Panc1 (cell line): ENCODE measurements at regions of chr19 and their contacts with region 1.

Region 1: DNA sequence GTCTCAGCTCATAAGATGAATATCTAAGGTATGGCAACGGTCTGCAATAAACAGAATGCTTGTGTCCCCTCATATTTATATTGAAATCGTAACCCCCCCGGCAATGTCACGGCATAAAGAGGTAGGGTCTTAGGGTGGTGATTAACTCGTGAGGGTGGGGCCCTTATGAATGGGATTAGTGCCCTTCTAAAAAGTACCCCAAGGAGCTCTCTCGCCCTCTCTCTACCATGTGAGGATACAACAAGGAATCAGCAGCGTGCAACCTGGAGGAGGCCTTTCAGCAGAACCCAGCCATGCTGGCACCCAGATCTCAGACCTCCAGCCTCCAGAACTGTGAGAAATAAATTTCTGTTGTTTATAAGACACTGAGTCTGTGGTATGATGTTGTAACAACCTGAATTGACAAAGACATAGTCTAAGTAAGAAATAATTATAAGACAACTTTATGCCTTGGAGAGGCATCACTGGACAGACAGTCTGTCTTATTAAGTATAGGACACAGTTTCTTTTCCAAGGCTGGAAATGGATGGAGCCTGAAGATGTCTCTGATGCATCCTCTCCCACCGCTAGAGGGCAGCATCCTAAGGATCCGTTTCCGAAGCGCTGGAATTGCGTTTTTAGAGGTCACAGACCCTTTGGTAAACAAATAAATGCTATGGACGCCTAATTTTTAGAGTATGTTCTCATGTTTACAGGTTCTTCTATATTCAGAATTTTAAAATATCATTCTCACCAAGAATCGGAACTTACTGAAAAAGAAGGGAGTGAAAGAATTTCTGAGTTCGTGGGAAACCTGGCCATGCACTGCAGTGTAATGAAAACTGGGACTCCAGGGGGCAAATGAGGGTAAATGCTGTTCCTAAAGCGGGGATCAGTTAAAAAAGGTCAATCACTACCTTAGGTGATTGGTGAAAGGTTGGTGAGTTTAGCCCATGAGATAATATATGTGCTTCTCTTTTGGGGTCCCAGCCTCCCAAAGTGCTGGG is 13.3 kb upstream of the LEUTX start:
- DNase-seq: peak; percentile 89
- ATAC-seq: peak; percentile 76
- H3K4me3 ChIP-seq: no peak overlapping the region
- H3K27ac ChIP-seq: no peak overlapping the region
- H3K4me1 ChIP-seq: no peaks in the 10 kb centered on the region
- H3K27me3 ChIP-seq: peaks cover 42% of the 10 kb centered on the region
- CTCF ChIP-seq: no peak

Region 2: DNA sequence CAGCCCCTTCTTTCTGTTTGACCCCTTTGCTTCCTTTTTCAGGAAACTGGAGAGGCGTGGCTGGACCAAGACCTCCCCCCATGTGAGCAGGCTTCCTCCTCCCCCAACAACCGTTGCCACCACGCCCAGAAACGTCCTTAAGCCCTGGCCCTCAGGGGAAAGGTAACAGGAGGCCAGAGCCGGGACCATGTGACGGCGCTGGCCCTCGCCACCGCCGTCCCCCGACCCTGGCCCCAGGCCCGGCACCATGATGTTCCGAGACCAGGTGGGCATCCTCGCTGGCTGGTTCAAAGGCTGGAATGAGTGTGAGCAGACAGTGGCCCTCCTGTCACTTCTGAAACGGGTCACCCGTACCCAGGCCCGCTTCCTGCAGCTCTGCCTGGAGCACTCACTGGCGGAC is 408.7 kb before region 1 on chr19:
- CTCF ChIA-PET with region 1: no interaction called
- POLR2A ChIA-PET with region 1: no interaction called
- in situ Hi-C with region 1: no loop called
- intact Hi-C with region 1: no loop called
- DNase-seq: no peak
- ATAC-seq: no peak
- H3K4me3 ChIP-seq: no peak overlapping the region
- H3K27ac ChIP-seq: no peak overlapping the region
- H3K4me1 ChIP-seq: no peaks in the 10 kb centered on the region
- H3K27me3 ChIP-seq: no peaks in the 10 kb centered on the region
- CTCF ChIP-seq: no peak

Region 3: GRCh38 chr19:39372047-39372802 is 393.2 kb before region 1 on chr19:
- CTCF ChIA-PET with region 1: interaction called, 11 read pairs
- POLR2A ChIA-PET with region 1: no interaction called
- in situ Hi-C with region 1: no loop called
- intact Hi-C with region 1: no loop called
- DNase-seq: no peak
- ATAC-seq: peak; percentile 2
- H3K4me3 ChIP-seq: no peak overlapping the region
- H3K27ac ChIP-seq: no peak overlapping the region
- H3K4me1 ChIP-seq: no peaks in the 10 kb centered on the region
- H3K27me3 ChIP-seq: no peaks in the 10 kb centered on the region
- CTCF ChIP-seq: no peak

Region 4: GRCh38 chr19:39599116-39599515 is 166.3 kb before region 1 on chr19:
- CTCF ChIA-PET with region 1: interaction called, 11 read pairs
- POLR2A ChIA-PET with region 1: no interaction called
- in situ Hi-C with region 1: no loop called
- intact Hi-C with region 1: no loop called
- DNase-seq: no peak
- ATAC-seq: no peak
- H3K4me3 ChIP-seq: no peak overlapping the region
- H3K27ac ChIP-seq: no peak overlapping the region
- H3K4me1 ChIP-seq: no peaks in the 10 kb centered on the region
- H3K27me3 ChIP-seq: peaks cover 88% of the 10 kb centered on the region
- CTCF ChIP-seq: 0 out of 2 replicates have a peak, but pooled peaks have one; percentile 1

Region 5: GRCh38 chr19:39746836-39747529 is 18.4 kb before region 1 on chr19:
- CTCF ChIA-PET with region 1: interaction called, 11 read pairs
- POLR2A ChIA-PET with region 1: interaction called, 9 read pairs
- in situ Hi-C with region 1: no loop called
- intact Hi-C with region 1: no loop called
- DNase-seq: no peak
- ATAC-seq: peak; percentile 83
- H3K4me3 ChIP-seq: no peak overlapping the region
- H3K27ac ChIP-seq: no peak overlapping the region
- H3K4me1 ChIP-seq: no peaks in the 10 kb centered on the region
- H3K27me3 ChIP-seq: peaks cover 92% of the 10 kb centered on the region
- CTCF ChIP-seq: no peak

Region 6: DNA sequence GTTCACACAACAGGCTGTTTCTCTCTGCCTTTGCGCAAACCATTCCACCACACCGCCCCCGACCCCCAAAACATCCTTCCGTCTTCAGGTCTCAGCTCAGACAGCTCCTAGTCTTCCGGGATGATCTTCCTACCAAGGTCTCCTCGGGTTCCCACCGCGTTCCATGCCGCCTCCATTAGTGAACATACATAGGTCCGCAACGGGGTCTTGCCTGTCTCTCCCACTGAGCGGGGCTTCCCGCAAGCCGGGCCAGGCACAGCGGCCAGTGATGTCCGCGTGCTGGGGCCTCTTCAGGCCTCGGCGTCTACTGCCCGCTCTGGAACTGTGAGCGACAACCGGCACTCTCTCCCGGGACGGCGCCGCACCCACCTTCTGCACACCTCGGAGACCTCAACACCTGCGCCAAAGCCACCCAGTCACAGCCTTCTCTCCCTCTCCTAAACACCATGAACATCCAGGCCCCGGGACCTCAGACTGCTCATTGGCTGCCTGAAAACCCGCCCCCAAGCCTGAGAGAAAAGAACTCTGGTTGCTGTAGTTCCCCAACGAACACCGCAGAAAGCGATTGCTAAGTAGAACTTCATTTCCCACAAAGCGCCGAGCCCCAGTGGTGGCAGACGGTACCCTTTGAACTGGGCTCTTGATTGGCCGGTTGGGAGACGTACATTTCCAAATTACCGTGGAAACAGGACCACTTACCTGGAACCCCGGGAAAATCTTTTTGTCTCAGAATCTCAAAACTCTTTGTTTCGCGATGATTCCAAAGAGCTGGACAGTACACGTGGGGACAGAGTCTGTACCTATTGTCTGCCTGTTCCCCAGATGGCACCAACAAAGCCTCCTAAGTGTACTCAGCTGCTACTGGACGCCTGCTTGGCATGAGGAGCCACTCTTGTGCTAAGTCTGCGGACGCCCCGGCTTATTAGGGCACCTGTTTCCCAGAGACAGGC is 59.0 kb after region 1 on chr19:
- CTCF ChIA-PET with region 1: interaction called, 12 read pairs
- POLR2A ChIA-PET with region 1: interaction called, 5 read pairs
- in situ Hi-C with region 1: no loop called
- intact Hi-C with region 1: no loop called
- DNase-seq: peak; percentile 100
- ATAC-seq: peak; percentile 97
- H3K4me3 ChIP-seq: peak overlapping the region; percentile 37 to 51
- H3K27ac ChIP-seq: peak overlapping the region; percentile 78
- H3K4me1 ChIP-seq: peaks cover 22% of the 10 kb centered on the region
- H3K27me3 ChIP-seq: no peaks in the 10 kb centered on the region
- CTCF ChIP-seq: no peak

Region 7: GRCh38 chr19:39889872-39890545 is 124.6 kb after region 1 on chr19:
- CTCF ChIA-PET with region 1: no interaction called
- POLR2A ChIA-PET with region 1: no interaction called
- in situ Hi-C with region 1: no loop called
- intact Hi-C with region 1: no loop called
- DNase-seq: no peak
- ATAC-seq: peak; percentile 0; the same call in 1 of the 2 replicates
- H3K4me3 ChIP-seq: no peak overlapping the region
- H3K27ac ChIP-seq: no peak overlapping the region
- H3K4me1 ChIP-seq: no peaks in the 10 kb centered on the region
- H3K27me3 ChIP-seq: no peaks in the 10 kb centered on the region
- CTCF ChIP-seq: no peak

Region 8: GRCh38 chr19:40147693-40148347 is 382.4 kb after region 1 on chr19:
- CTCF ChIA-PET with region 1: interaction called, 11 read pairs
- POLR2A ChIA-PET with region 1: no interaction called
- in situ Hi-C with region 1: no loop called
- intact Hi-C with region 1: no loop called
- DNase-seq: peak; percentile 100
- ATAC-seq: peak; percentile 87
- H3K4me3 ChIP-seq: peak overlapping the region; percentile 24 to 50
- H3K27ac ChIP-seq: peak overlapping the region; percentile 42
- H3K4me1 ChIP-seq: peaks cover 14% of the 10 kb centered on the region
- H3K27me3 ChIP-seq: no peaks in the 10 kb centered on the region
- CTCF ChIP-seq: no peak